ENCODE measurements at regions of chr17 and their contacts with region 1.

Region 1: DNA sequence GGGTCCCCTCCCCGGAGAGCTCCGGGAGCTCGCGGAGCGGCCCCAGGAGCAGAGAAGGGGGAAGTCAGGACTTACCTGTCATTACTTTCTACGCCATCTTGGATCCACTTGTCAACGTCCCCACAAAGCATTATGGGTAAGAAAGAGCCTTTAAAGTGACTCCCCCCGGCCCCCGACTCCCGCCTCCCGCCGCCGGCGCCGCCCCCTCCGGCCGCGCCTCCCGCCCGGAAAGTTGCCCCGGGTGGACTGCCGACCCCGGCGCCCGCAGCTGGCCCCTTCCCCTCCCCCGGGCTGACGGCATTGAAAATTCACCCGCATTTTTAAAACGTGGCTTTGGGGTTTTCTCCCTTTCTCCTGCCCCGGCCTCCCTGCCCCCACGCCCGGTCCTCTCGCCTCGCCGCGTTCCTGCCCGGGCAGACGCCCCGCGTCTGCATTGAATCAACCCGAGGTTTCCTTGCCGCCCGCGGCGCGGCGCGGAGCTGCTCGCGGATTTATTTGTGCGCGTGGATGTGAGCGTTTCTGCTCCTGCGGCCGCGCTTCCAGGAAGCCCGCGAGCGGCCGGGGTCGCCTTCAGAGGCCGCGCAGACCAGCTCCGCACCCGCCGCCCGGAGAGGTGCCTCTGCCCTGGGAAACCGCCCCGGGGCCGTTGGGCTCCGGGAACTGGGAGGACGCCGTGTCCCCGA is at the start of gene HELZ:
- DNase-seq: peak; percentile 80 to 83 (median 81)
- H3K4me3 ChIP-seq: peak within 1 kb of the TSS; percentile 78 to 81
- H3K4me3 Mint-ChIP-seq: peak within 1 kb of the TSS; percentile 88 to 93 (median 90)
- H3K27ac ChIP-seq: peak within 1 kb of the TSS; percentile 84
- H3K27ac Mint-ChIP-seq: peak within 1 kb of the TSS; percentile 86 to 96 (median 92)
- H3K4me1 ChIP-seq: peaks cover 63% of the 10 kb centered on the region
- H3K4me1 Mint-ChIP-seq: peaks cover 42 to 60% (median 50%) of the 10 kb centered on the region in 4 donors
- H3K27me3 ChIP-seq: no peaks in the 10 kb centered on the region
- H3K27me3 Mint-ChIP-seq: no peaks in the 10 kb centered on the region
- total RNA-seq, gene HELZ: 100 to 104 TPM

Region 2: GRCh38 chr17:67221062-67221998 is 23.9 kb before region 1 on chr17:
- CTCF ChIA-PET with region 1: interaction called, 5 read pairs
- POLR2A ChIA-PET with region 1: interaction called, 12 read pairs
- intact Hi-C with region 1: no loop called
- DNase-seq: peak; percentile 33 to 58 (median 50)
- H3K4me3 ChIP-seq: no peak overlapping the region
- H3K4me3 Mint-ChIP-seq: peak overlapping the region in 1 of 8 donors; percentile 43
- H3K27ac ChIP-seq: no peak overlapping the region
- H3K27ac Mint-ChIP-seq: peak overlapping the region in 4 of 7 donors; percentile 3 to 77 (median 50)
- H3K4me1 ChIP-seq: peaks cover 16% of the 10 kb centered on the region
- H3K4me1 Mint-ChIP-seq: peaks cover 37 to 60% (median 49%) of the 10 kb centered on the region in 4 donors
- H3K27me3 ChIP-seq: no peaks in the 10 kb centered on the region
- H3K27me3 Mint-ChIP-seq: no peaks in the 10 kb centered on the region

Region 3: GRCh38 chr17:67260170-67261011 is 15.2 kb after region 1 on chr17:
- CTCF ChIA-PET with region 1: interaction called, 4 read pairs
- POLR2A ChIA-PET with region 1: interaction called, 24 read pairs
- intact Hi-C with region 1: loop called (anchors 1 kb)
- DNase-seq: no peak
- H3K4me3 ChIP-seq: no peak overlapping the region
- H3K4me3 Mint-ChIP-seq: no peak overlapping the region
- H3K27ac ChIP-seq: no peak overlapping the region
- H3K27ac Mint-ChIP-seq: peak overlapping the region in 3 of 7 donors; percentile 13 to 70 (median 50)
- H3K4me1 ChIP-seq: peaks cover 29% of the 10 kb centered on the region
- H3K4me1 Mint-ChIP-seq: peaks cover 18 to 37% (median 27%) of the 10 kb centered on the region in 4 donors
- H3K27me3 ChIP-seq: no peaks in the 10 kb centered on the region
- H3K27me3 Mint-ChIP-seq: no peaks in the 10 kb centered on the region

Region 4: GRCh38 chr17:67293251-67294203 is 48.3 kb after region 1 on chr17:
- CTCF ChIA-PET with region 1: interaction called, 8 read pairs
- POLR2A ChIA-PET with region 1: no interaction called
- intact Hi-C with region 1: loop called (anchors 1 kb)
- DNase-seq: peak; percentile 61 to 70 (median 69)
- H3K4me3 ChIP-seq: no peak overlapping the region
- H3K4me3 Mint-ChIP-seq: peak overlapping the region in 6 of 8 donors; percentile 32 to 69 (median 52)
- H3K27ac ChIP-seq: no peak overlapping the region
- H3K27ac Mint-ChIP-seq: peak overlapping the region in 5 of 7 donors; percentile 23 to 47 (median 36)
- H3K4me1 ChIP-seq: no peaks in the 10 kb centered on the region
- H3K4me1 Mint-ChIP-seq: peaks cover 0 to 7% (median 5%) of the 10 kb centered on the region in 4 donors
- H3K27me3 ChIP-seq: no peaks in the 10 kb centered on the region
- H3K27me3 Mint-ChIP-seq: no peaks in the 10 kb centered on the region

Region 5: GRCh38 chr17:67359960-67360773 is 115.0 kb after region 1 on chr17:
- CTCF ChIA-PET with region 1: no interaction called
- POLR2A ChIA-PET with region 1: interaction called, 3 read pairs
- intact Hi-C with region 1: loop called (anchors 5 kb)
- DNase-seq: peak; percentile 66 to 86 (median 74)
- H3K4me3 ChIP-seq: no peak overlapping the region
- H3K4me3 Mint-ChIP-seq: peak overlapping the region; percentile 22 to 72 (median 55)
- H3K27ac ChIP-seq: peak overlapping the region; percentile 48
- H3K27ac Mint-ChIP-seq: peak overlapping the region; percentile 79 to 93 (median 90)
- H3K4me1 ChIP-seq: peaks cover 75% of the 10 kb centered on the region
- H3K4me1 Mint-ChIP-seq: peaks cover 47 to 80% (median 61%) of the 10 kb centered on the region in 4 donors
- H3K27me3 ChIP-seq: no peaks in the 10 kb centered on the region
- H3K27me3 Mint-ChIP-seq: no peaks in the 10 kb centered on the region

Region 6: DNA sequence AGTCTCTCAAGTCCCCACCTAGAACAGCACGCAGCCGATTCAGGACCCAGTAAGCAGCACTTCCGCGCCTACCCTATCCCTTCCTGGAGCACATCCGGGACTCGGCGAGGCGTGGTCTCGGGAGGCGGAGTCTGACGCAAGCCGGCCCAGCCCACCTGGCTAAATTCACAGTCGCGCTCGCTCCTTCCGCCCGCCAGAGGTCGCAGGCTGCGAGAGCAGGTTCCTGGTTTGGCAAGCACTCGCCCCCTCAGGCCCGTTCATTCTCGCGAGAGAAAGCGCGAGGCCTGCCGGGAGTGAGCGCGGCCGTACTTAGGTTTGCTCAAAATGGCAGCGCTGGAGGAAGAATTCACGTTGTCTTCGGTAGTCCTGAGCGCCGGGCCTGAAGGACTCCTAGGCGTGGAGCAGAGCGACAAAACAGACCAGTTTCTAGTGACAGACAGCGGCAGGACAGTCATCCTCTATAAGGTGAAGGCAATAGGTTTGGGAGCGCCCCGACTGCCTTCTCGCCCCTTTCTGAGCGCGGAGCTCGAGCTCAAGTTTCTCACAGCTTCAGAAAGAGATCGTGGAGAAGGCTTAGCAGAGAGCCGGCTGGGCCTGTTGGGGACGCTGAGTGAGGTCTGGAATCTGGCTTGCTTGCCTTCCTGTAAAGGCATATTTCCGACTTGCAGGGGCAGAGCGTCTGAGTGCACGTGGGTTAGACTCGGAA is 472.6 kb after region 1 on chr17 and contains the start of gene NOL11:
- CTCF ChIA-PET with region 1: no interaction called
- POLR2A ChIA-PET with region 1: interaction called, 4 read pairs
- intact Hi-C with region 1: loop called (anchors 5 kb)
- DNase-seq: peak; percentile 99 to 100 (median 99)
- H3K4me3 ChIP-seq: peak within 1 kb of the TSS; percentile 89 to 100
- H3K4me3 Mint-ChIP-seq: peak within 1 kb of the TSS; percentile 98 to 100 (median 100)
- H3K27ac ChIP-seq: peak within 1 kb of the TSS; percentile 94
- H3K27ac Mint-ChIP-seq: peak within 1 kb of the TSS; percentile 97 to 100 (median 99)
- H3K4me1 ChIP-seq: peaks cover 28% of the 10 kb centered on the region
- H3K4me1 Mint-ChIP-seq: peaks cover 10 to 33% (median 19%) of the 10 kb centered on the region in 4 donors
- H3K27me3 ChIP-seq: no peaks in the 10 kb centered on the region
- H3K27me3 Mint-ChIP-seq: peaks cover 0 to 2% of the 10 kb centered on the region in 2 donors
- total RNA-seq, gene NOL11: 56.6 to 57.1 TPM